Spleen (tissue), 13 donors: ENCODE measurements at regions of chr1 and their contacts with region 1.

Region 1: GRCh38 chr1:147494998-147495580 is 46.2 kb upstream of the BCL9 start:
- DNase-seq: peak; percentile 83
- H3K4me3 ChIP-seq: no peak overlapping the region
- H3K27ac ChIP-seq: no peak overlapping the region
- H3K4me1 ChIP-seq: peaks cover 0 to 16% (median 11%) of the 10 kb centered on the region in 6 donors
- H3K27me3 ChIP-seq: peaks cover 0 to 8% (median 0%) of the 10 kb centered on the region in 7 donors
- CTCF ChIP-seq: peak; percentile 70 to 88 (median 85)
- POLR2A ChIP-seq: no peak

Region 2: GRCh38 chr1:147627435-147628110 is 132.5 kb after region 1 on chr1:
- intact Hi-C with region 1: loop called (anchors 5 kb)
- DNase-seq: peak; percentile 86
- H3K4me3 ChIP-seq: no peak overlapping the region
- H3K27ac ChIP-seq: peak overlapping the region in 4 of 8 donors; percentile 59 to 72 (median 62)
- H3K4me1 ChIP-seq: peaks cover 0 to 61% (median 24%) of the 10 kb centered on the region in 6 donors
- H3K27me3 ChIP-seq: no peaks in the 10 kb centered on the region
- CTCF ChIP-seq: peak; percentile 43 to 93 (median 86)
- POLR2A ChIP-seq: no peak